AG04450 (cell line): ENCODE measurements at regions of chr19 and their contacts with region 1.

Region 1: GRCh38 chr19:45278087-45278486 is 27.0 kb downstream of the MARK4 start:
- DNase-seq: no peak
- H3K4me3 ChIP-seq: no peak overlapping the region
- H3K27ac ChIP-seq: no peak overlapping the region
- H3K27me3 ChIP-seq: no peaks in the 10 kb centered on the region
- CTCF ChIP-seq: no peak

Region 2: GRCh38 chr19:45164577-45165335 is 113.3 kb before region 1 on chr19:
- CTCF ChIA-PET with region 1: no interaction called
- POLR2A ChIA-PET with region 1: interaction called, 10 read pairs
- DNase-seq: no peak
- H3K4me3 ChIP-seq: no peak overlapping the region
- H3K27ac ChIP-seq: no peak overlapping the region
- H3K27me3 ChIP-seq: peaks cover 6% of the 10 kb centered on the region
- CTCF ChIP-seq: no peak